Activated CD8-positive, alpha-beta memory T cell treated with anti-CD3 and anti-CD28 coated beads, Interleukin-2, amount 10 ng/mL, durations not matched to agents 7 days and 5 days (primary cell): ENCODE measurements at regions of chr12 and their contacts with region 1.

Region 1: GRCh38 chr12:52327052-52327829 is 6.0 kb upstream of the KRT83 start:
- DNase-seq: peak; percentile 86
- ATAC-seq: peak; percentile 97
- H3K4me3 Mint-ChIP-seq: no peak overlapping the region
- H3K27ac Mint-ChIP-seq: no peak overlapping the region
- H3K4me1 Mint-ChIP-seq: peaks cover 18% of the 10 kb centered on the region
- H3K27me3 Mint-ChIP-seq: peaks cover 39% of the 10 kb centered on the region

Region 2: GRCh38 chr12:52156736-52157565 is 170.3 kb before region 1 on chr12:
- CTCF ChIA-PET with region 1: interaction called, 27 read pairs
- DNase-seq: peak; percentile 79
- ATAC-seq: peak; percentile 58
- H3K4me3 Mint-ChIP-seq: no peak overlapping the region
- H3K27ac Mint-ChIP-seq: no peak overlapping the region
- H3K4me1 Mint-ChIP-seq: peaks cover 26% of the 10 kb centered on the region
- H3K27me3 Mint-ChIP-seq: peaks cover 3% of the 10 kb centered on the region

Region 3: GRCh38 chr12:52221912-52222457 is 105.3 kb before region 1 on chr12:
- CTCF ChIA-PET with region 1: interaction called, 17 read pairs
- DNase-seq: peak; percentile 84
- ATAC-seq: peak; percentile 80
- H3K4me3 Mint-ChIP-seq: no peak overlapping the region
- H3K27ac Mint-ChIP-seq: no peak overlapping the region
- H3K4me1 Mint-ChIP-seq: peaks cover 8% of the 10 kb centered on the region
- H3K27me3 Mint-ChIP-seq: peaks cover 74% of the 10 kb centered on the region

Region 4: DNA sequence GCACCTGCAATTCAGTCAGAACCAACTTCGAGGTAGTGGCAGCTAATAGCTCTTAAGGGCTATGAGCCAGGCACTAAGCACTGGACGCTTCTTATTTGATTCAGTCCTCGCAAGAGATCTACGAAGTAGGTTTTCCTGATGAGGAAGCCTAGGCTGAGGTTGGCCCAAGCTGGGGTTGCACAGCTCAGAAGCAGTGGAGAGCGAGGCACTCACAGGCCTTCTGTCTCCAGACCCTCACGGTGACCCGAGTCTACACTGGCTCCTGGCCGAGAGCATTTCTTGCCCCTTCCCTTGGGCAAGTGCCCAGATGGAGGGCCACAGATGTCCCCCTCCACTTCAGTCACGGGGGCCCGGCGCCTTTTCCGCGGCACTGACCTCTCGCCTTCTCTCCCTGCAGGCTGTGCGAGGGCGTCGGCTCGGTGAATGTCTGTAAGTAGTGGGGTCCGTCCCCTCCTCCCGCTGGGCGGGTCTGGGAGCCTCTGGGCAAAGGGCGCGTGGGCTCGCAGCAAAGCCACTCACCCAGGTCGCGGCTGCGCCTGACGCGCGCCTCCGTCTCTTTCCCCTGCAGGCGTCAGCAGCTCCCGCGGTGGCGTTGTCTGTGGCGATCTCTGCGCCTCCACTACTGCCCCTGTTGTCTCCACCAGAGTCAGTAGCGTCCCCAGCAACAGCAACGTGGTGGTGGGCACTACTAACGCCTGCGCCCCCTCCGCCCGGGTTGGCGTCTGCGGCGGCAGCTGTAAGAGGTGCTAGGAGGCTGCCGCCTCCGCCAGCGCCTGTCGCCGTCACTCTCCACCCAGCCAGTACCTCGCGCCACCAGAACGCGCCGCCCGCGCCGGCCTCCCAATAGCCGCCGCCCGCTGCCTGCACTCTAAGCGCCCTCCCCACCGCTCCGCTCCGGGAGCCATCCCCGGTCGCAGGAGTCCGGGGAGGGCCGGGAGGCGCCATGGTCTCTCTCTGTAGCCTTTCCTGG is 19.1 kb before region 1 on chr12:
- CTCF ChIA-PET with region 1: interaction called, 16 read pairs
- DNase-seq: peak; percentile 63
- ATAC-seq: peak; percentile 84
- H3K4me3 Mint-ChIP-seq: peak overlapping the region; percentile 55
- H3K27ac Mint-ChIP-seq: no peak overlapping the region
- H3K4me1 Mint-ChIP-seq: peaks cover 23% of the 10 kb centered on the region
- H3K27me3 Mint-ChIP-seq: peaks cover 77% of the 10 kb centered on the region

Region 5: DNA sequence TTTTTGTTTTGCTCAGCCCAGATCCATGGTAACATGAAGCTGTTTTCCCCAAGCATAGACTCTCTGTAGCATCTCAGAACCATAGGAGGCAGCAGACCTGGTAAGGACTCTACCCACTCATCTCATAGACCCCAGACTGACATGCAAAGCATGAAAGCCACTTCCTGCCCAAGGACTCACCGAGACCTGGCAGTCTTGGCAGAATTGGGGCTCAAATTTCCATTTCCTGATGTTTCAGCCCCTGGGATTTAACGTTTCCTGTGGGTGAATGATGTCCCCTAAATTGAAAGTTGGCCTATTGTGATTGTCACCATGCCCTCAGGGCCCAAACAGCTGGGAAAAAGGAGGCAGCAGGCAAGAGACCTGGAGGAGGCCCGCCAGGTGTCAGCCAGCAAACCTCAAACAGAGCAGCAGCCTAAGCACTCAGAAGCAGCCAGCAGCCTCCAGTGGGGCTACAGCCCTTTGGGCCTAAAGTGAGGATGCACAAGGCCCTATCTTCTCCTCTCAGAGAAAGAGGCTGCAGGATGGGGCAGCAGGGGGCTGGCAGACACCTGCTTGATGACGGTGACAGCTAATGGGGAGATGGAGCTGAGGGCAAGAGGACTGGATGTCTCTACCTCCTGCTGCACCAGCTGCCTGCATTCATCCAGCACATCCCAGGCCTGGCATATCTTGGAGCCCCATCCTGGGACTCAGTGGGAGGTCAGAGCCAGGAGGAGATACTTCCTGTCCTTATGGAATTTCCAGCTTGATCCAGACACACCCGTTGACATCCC is 31.5 kb after region 1 on chr12:
- CTCF ChIA-PET with region 1: interaction called, 25 read pairs
- DNase-seq: peak; percentile 79
- ATAC-seq: peak; percentile 93
- H3K4me3 Mint-ChIP-seq: no peak overlapping the region
- H3K27ac Mint-ChIP-seq: peak overlapping the region; percentile 59
- H3K4me1 Mint-ChIP-seq: peaks cover 37% of the 10 kb centered on the region
- H3K27me3 Mint-ChIP-seq: peaks cover 10% of the 10 kb centered on the region

Region 6: GRCh38 chr12:52436000-52436827 is 109.0 kb after region 1 on chr12:
- CTCF ChIA-PET with region 1: no interaction called
- DNase-seq: no peak
- ATAC-seq: no peak
- H3K4me3 Mint-ChIP-seq: no peak overlapping the region
- H3K27ac Mint-ChIP-seq: no peak overlapping the region
- H3K4me1 Mint-ChIP-seq: no peaks in the 10 kb centered on the region
- H3K27me3 Mint-ChIP-seq: peaks cover 27% of the 10 kb centered on the region

Region 7: GRCh38 chr12:52667511-52667910 is 340.3 kb after region 1 on chr12:
- CTCF ChIA-PET with region 1: no interaction called
- DNase-seq: no peak
- ATAC-seq: no peak
- H3K4me3 Mint-ChIP-seq: no peak overlapping the region
- H3K27ac Mint-ChIP-seq: no peak overlapping the region
- H3K4me1 Mint-ChIP-seq: no peaks in the 10 kb centered on the region
- H3K27me3 Mint-ChIP-seq: peaks cover 23% of the 10 kb centered on the region